AG04450 (cell line): ENCODE measurements at regions of chr15 and their contacts with region 1.

Region 1: GRCh38 chr15:34927726-34928125 is 41.8 kb downstream of the AQR start:
- DNase-seq: no peak
- H3K4me3 ChIP-seq: no peak overlapping the region
- H3K27ac ChIP-seq: no peak overlapping the region
- H3K27me3 ChIP-seq: no peaks in the 10 kb centered on the region
- CTCF ChIP-seq: no peak

Region 2: DNA sequence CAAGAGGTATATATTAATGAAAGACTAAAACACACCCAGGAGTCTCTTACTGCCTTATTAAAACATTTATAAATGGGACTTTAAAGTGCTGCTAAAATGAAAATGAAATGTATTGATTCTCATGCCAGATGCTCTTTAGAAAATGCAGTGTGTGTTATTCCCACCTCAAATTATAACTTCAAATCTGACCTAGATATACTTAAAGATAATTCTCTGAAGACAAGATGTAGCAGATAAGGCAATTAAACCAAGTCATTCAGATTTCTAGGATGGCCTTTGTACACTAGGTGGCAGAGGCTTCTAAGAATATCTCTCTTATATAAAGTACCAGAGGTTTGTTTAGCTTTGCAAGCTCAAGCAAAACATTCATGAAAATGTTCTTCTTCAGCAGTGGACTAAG is 317.4 kb before region 1 on chr15:
- CTCF ChIA-PET with region 1: interaction called, 30 read pairs
- POLR2A ChIA-PET with region 1: no interaction called
- DNase-seq: no peak
- H3K4me3 ChIP-seq: no peak overlapping the region
- H3K27ac ChIP-seq: no peak overlapping the region
- H3K27me3 ChIP-seq: no peaks in the 10 kb centered on the region
- CTCF ChIP-seq: peak; percentile 59

Region 3: DNA sequence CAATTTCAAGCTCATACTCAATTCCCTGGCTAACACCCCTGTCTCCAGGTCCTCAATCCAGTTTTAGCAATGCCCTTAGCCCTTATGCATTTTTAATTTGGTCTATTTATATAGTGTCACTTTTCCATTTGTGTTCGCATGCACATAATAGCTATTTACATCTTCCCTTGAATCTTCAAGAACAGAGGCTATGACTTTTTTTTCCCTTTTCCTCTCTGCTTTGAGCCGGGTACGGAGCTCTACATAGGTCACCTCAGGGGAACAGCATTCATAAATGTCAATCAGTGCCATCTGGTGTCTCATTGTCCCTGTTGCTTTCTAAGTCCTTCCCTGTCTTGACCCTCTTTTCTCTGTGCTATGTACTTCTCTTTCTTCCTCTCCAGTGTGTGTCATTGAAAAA is 105.9 kb before region 1 on chr15:
- CTCF ChIA-PET with region 1: no interaction called
- POLR2A ChIA-PET with region 1: no interaction called
- DNase-seq: no peak
- H3K4me3 ChIP-seq: no peak overlapping the region
- H3K27ac ChIP-seq: no peak overlapping the region
- H3K27me3 ChIP-seq: no peaks in the 10 kb centered on the region
- CTCF ChIP-seq: no peak